AG04450 (cell line): ENCODE measurements at regions of chr9 and their contacts with region 1.

Region 1: GRCh38 chr9:70602321-70603019 is 188.0 kb upstream of the KLF9 start:
- DNase-seq: peak; percentile 76
- H3K4me3 ChIP-seq: peak overlapping the region; percentile 14; the same call in 1 of the 2 replicates
- H3K27ac ChIP-seq: peak overlapping the region; percentile 99
- H3K27me3 ChIP-seq: no peaks in the 10 kb centered on the region
- CTCF ChIP-seq: peak; percentile 78

Region 2: DNA sequence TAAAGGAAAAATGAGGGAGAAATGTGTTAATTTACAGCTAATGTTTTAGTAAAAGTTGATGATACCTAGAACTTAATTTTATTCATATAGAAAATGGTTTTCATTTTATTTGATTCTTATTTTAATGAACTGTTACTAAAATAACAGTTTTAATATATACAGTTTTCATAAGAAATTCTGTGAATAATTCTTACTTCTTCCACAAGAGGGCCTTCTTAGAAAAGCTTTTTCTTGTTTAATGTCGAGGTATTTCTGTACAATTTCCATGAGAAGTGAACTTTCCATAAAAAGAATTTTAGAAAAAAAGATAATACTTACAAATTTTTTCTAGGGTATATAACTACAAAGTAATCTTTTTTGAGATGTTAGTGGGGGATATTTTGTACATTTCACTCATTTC is 261.9 kb before region 1 on chr9:
- CTCF ChIA-PET with region 1: interaction called, 126 read pairs
- POLR2A ChIA-PET with region 1: no interaction called
- DNase-seq: no peak
- H3K4me3 ChIP-seq: no peak overlapping the region
- H3K27ac ChIP-seq: no peak overlapping the region
- H3K27me3 ChIP-seq: no peaks in the 10 kb centered on the region
- CTCF ChIP-seq: peak; percentile 53

Region 3: GRCh38 chr9:70367305-70367930 is 235.1 kb before region 1 on chr9:
- CTCF ChIA-PET with region 1: interaction called, 14 read pairs
- POLR2A ChIA-PET with region 1: interaction called, 3 read pairs
- DNase-seq: no peak
- H3K4me3 ChIP-seq: no peak overlapping the region
- H3K27ac ChIP-seq: no peak overlapping the region
- H3K27me3 ChIP-seq: no peaks in the 10 kb centered on the region
- CTCF ChIP-seq: no peak

Region 4: GRCh38 chr9:70406434-70406862 is 196.0 kb before region 1 on chr9:
- CTCF ChIA-PET with region 1: interaction called, 14 read pairs
- POLR2A ChIA-PET with region 1: interaction called, 3 read pairs
- DNase-seq: no peak
- H3K4me3 ChIP-seq: no peak overlapping the region
- H3K27ac ChIP-seq: peak overlapping the region; percentile 98
- H3K27me3 ChIP-seq: no peaks in the 10 kb centered on the region
- CTCF ChIP-seq: no peak

Region 5: DNA sequence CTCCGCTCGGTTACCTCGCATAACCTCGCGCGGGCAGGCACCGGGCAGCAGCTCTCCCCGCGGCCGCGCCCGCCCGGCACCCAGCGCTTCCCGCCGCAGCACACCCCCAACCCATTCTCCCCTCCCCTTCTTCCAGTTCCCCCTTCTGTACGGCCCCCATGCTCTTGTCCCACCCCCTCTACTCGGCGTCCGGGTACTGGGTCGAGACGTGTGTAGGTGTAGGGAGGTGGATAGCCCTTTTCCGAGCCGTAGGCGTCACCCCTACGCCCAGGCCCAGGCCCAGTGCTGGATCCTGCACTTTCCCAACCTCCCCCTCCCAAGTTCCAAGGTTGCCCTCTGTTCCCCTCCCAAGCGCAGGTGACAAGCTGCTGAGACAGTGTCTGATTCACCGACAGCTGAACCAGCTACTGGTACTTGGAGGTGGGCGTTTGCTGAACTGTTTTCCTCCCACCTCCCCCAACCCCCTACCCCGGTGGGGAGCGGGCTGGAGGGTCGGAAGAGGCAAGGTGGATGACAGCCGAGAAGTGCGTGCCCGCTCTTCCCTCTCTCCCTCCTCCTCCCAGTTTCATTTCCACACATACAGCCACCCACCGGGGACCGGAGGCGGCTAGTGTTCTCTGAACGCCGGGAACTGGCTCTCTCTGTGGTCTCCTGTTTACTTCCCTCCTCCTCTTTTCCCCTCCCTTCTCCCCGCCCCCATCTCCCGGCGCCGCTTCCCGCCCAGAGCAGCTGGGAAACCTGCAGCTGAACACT is 182.0 kb before region 1 on chr9:
- CTCF ChIA-PET with region 1: interaction called, 25 read pairs
- POLR2A ChIA-PET with region 1: interaction called, 73 read pairs
- DNase-seq: no peak
- H3K4me3 ChIP-seq: peak overlapping the region; percentile 74
- H3K27ac ChIP-seq: peak overlapping the region; percentile 100
- H3K27me3 ChIP-seq: no peaks in the 10 kb centered on the region
- CTCF ChIP-seq: no peak

Region 6: DNA sequence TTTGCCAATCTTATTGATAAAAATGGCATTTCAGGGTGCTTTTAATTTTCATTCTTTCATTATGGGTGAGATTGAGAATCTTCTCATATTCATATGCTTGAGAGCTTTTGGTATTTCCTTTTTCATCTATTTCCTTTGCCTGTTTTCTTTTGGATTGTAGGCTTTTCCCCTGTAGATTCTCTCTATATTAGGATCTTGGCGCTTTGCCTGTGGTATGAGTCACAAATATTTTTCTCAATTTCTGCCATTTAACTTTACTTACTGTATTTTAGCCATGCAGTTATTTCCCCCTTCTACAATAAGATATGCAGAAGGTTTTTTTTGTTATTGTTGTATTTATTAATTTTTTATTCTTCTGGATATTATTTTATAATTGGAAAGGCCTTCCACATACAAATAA is 166.5 kb before region 1 on chr9:
- CTCF ChIA-PET with region 1: no interaction called
- POLR2A ChIA-PET with region 1: no interaction called
- DNase-seq: no peak
- H3K4me3 ChIP-seq: no peak overlapping the region
- H3K27ac ChIP-seq: no peak overlapping the region
- H3K27me3 ChIP-seq: no peaks in the 10 kb centered on the region
- CTCF ChIP-seq: no peak

Region 7: GRCh38 chr9:70614786-70615463 is 12.5 kb after region 1 on chr9:
- CTCF ChIA-PET with region 1: interaction called, 15 read pairs
- POLR2A ChIA-PET with region 1: no interaction called
- DNase-seq: no peak
- H3K4me3 ChIP-seq: no peak overlapping the region
- H3K27ac ChIP-seq: no peak overlapping the region
- H3K27me3 ChIP-seq: no peaks in the 10 kb centered on the region
- CTCF ChIP-seq: no peak

Region 8: GRCh38 chr9:70625078-70625477 is 22.6 kb after region 1 on chr9:
- CTCF ChIA-PET with region 1: no interaction called
- POLR2A ChIA-PET with region 1: no interaction called
- DNase-seq: no peak
- H3K4me3 ChIP-seq: no peak overlapping the region
- H3K27ac ChIP-seq: no peak overlapping the region
- H3K27me3 ChIP-seq: peaks cover 10% of the 10 kb centered on the region
- CTCF ChIP-seq: no peak